ENCODE measurements at regions of chr7 and their contacts with region 1.

Region 1: DNA sequence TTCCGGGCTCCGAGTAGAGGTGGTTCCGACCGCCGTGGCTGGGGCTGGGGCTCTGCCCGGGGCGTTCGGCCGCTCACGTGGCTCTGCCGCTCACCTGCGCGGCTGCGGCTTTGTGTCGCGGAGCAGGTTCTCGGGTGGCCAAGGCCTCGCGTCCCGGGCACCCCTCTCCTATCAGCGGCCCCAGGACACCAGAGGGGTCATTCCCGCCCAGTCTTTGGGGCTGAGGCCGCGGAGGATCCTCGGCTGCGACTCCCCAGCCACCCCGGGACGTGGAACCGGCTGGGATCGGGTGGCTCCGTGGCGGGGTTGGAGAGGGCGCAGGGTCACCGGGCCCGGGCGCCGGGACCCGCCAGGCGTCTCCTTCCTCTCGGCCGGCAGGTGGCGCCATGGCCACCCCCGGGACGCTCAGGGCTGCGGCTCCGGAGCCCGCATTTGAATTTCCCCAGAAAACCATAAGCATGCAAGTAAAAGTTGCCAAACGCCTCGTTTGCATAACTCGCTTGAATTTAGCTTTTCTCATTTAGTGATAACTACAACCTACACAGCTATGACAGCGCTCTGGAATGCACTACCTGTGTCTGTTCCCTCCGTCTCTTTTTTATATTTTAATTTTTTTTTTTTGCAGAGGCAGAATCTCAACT is 1.2 kb downstream of the COL26A1 start:
- DNase-seq: peak; percentile 81
- ATAC-seq: peak; percentile 96
- H3K4me3 Mint-ChIP-seq: no peak overlapping the region
- H3K27ac Mint-ChIP-seq: no peak overlapping the region
- H3K4me1 Mint-ChIP-seq: peaks cover 3% of the 10 kb centered on the region
- H3K27me3 Mint-ChIP-seq: peaks cover 26% of the 10 kb centered on the region

Region 2: DNA sequence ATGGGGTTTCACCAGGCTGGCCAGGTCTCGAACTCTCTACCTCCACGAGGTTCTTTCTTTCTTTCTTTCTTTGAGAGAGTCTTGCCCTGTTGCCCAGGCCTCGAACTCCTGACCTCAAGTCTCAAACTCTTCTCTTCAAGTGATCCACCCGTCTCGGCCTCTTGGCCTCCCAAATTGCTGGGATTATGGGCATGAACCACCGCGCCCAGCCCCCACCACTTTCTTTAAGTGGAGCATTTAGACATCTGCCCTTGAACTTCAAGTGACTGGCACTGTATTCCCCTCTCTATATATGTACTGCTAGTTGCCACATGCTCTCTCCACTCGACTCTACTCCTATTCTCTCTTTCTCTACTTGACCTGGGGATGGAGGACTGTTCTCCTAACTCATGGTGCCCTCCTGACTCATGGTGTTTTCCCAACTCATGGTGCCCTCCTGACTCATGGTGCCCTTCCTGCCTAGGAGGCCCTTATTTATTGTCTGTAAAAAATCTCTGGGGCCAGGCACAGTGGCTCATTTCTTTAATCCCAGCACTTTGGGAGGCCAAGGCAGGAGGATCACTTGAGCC is 448.9 kb before region 1 on chr7:
- CTCF ChIA-PET with region 1: no interaction called
- POLR2A ChIA-PET with region 1: no interaction called
- intact Hi-C with region 1: no loop called
- DNase-seq: peak; percentile 36
- ATAC-seq: peak; percentile 92
- H3K4me3 Mint-ChIP-seq: no peak overlapping the region
- H3K27ac Mint-ChIP-seq: peak overlapping the region; percentile 11
- H3K4me1 Mint-ChIP-seq: peaks cover 4% of the 10 kb centered on the region
- H3K27me3 Mint-ChIP-seq: peaks cover 13% of the 10 kb centered on the region

Region 3: DNA sequence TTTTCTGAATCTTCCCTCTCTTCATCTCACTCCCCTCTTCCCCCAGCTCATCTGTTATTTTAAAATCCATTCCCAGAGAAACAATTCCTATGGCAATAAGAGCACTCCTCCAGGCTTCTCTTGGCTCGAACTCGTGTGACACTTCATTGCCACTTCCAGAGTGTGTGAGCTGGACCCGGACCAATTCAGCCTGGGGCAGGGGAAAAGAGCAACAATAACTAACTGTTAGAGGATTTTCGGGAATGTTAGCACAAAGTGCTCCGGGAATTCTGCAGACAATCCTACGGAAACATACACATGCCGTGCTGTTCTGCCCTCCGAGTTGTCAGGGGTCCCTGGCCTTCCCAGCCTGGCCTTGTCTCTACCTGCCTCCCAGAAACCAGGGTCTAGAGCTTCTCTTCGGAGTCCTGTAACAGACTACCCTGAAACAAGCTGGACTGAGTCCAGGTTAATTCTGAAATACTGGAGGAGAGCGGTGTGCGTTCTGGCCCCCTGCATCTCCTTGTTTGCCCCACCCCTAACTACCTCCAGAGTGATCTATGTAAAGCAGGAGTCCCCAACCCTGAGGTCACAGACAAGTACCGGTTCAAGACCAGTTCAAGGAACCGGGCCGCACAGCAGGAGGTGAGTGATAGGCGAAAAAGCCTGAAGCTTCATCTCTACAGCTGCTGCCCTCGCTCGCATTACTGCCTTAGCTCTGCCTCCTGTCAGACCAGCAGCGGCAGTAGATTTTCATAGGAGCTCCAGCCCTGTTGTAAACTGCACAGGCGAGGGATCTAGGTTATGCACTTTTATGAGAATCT is 10.2 kb after region 1 on chr7:
- CTCF ChIA-PET with region 1: interaction called, 12 read pairs
- POLR2A ChIA-PET with region 1: no interaction called
- intact Hi-C with region 1: no loop called
- DNase-seq: no peak
- ATAC-seq: no peak
- H3K4me3 Mint-ChIP-seq: no peak overlapping the region
- H3K27ac Mint-ChIP-seq: no peak overlapping the region
- H3K4me1 Mint-ChIP-seq: peaks cover 3% of the 10 kb centered on the region
- H3K27me3 Mint-ChIP-seq: peaks cover 12% of the 10 kb centered on the region

Region 4: DNA sequence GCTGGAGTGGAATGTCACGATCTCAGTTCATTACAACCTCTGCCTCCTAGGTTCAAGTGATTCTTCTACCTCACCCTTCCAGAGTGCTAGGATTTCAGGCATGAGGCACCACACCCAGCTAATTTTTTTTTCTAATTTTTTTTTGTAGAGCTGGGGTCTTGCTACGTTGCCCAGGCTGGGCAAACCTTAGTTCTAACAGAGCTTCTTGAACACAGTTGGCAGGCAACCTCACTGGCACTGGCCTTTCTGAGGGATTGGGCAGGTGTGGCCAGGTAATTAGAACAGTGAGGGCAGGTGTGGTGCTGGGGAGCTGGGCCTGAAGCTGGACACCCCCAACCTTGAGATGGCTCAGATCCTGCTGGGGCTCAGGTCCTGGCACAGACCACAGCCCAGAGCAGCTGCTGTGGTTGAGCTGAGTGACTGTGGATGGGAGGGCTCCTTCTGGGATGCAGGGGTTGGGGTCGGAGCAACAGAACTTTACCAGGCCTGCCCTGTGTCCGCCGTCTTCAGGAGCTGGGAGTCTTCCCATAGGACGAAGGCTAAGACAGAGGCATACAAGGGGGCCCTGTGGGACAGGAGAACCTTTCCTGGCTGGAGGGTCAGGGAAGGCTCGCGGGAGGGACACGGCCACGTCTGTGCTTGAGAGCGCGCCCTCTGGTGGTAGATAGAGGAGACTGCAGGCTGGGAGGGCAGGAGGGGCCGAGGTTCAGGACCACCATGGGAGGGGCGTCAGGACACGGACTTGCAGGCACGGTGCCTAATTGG is 47.1 kb after region 1 on chr7:
- CTCF ChIA-PET with region 1: interaction called, 16 read pairs
- POLR2A ChIA-PET with region 1: no interaction called
- intact Hi-C with region 1: loop called (anchors 1 kb)
- DNase-seq: peak; percentile 62
- ATAC-seq: peak; percentile 69
- H3K4me3 Mint-ChIP-seq: no peak overlapping the region
- H3K27ac Mint-ChIP-seq: no peak overlapping the region
- H3K4me1 Mint-ChIP-seq: peaks cover 6% of the 10 kb centered on the region
- H3K27me3 Mint-ChIP-seq: peaks cover 7% of the 10 kb centered on the region

Region 5: GRCh38 chr7:101436857-101437576 is 73.2 kb after region 1 on chr7:
- CTCF ChIA-PET with region 1: interaction called, 7 read pairs
- POLR2A ChIA-PET with region 1: no interaction called
- intact Hi-C with region 1: loop called in 1 of 2 experiments (anchors 1 kb)
- DNase-seq: no peak
- ATAC-seq: no peak
- H3K4me3 Mint-ChIP-seq: no peak overlapping the region
- H3K27ac Mint-ChIP-seq: no peak overlapping the region
- H3K4me1 Mint-ChIP-seq: peaks cover 3% of the 10 kb centered on the region
- H3K27me3 Mint-ChIP-seq: peaks cover 23% of the 10 kb centered on the region

Region 6: GRCh38 chr7:101507791-101508252 is 144.0 kb after region 1 on chr7:
- CTCF ChIA-PET with region 1: interaction called, 7 read pairs
- POLR2A ChIA-PET with region 1: no interaction called
- intact Hi-C with region 1: loop called (anchors 1 kb)
- DNase-seq: peak; percentile 67
- ATAC-seq: peak; percentile 49
- H3K4me3 Mint-ChIP-seq: no peak overlapping the region
- H3K27ac Mint-ChIP-seq: no peak overlapping the region
- H3K4me1 Mint-ChIP-seq: peaks cover 3% of the 10 kb centered on the region
- H3K27me3 Mint-ChIP-seq: peaks cover 11% of the 10 kb centered on the region

Region 7: GRCh38 chr7:101542527-101543241 is 178.8 kb after region 1 on chr7:
- CTCF ChIA-PET with region 1: interaction called, 5 read pairs
- POLR2A ChIA-PET with region 1: no interaction called
- intact Hi-C with region 1: loop called in 1 of 2 experiments (anchors 1 kb)
- DNase-seq: peak; percentile 85
- ATAC-seq: no peak
- H3K4me3 Mint-ChIP-seq: no peak overlapping the region
- H3K27ac Mint-ChIP-seq: no peak overlapping the region
- H3K4me1 Mint-ChIP-seq: no peaks in the 10 kb centered on the region
- H3K27me3 Mint-ChIP-seq: peaks cover 3% of the 10 kb centered on the region